Calu3 (cell line): ENCODE measurements at regions of chr10 and their contacts with region 1.

Region 1: DNA sequence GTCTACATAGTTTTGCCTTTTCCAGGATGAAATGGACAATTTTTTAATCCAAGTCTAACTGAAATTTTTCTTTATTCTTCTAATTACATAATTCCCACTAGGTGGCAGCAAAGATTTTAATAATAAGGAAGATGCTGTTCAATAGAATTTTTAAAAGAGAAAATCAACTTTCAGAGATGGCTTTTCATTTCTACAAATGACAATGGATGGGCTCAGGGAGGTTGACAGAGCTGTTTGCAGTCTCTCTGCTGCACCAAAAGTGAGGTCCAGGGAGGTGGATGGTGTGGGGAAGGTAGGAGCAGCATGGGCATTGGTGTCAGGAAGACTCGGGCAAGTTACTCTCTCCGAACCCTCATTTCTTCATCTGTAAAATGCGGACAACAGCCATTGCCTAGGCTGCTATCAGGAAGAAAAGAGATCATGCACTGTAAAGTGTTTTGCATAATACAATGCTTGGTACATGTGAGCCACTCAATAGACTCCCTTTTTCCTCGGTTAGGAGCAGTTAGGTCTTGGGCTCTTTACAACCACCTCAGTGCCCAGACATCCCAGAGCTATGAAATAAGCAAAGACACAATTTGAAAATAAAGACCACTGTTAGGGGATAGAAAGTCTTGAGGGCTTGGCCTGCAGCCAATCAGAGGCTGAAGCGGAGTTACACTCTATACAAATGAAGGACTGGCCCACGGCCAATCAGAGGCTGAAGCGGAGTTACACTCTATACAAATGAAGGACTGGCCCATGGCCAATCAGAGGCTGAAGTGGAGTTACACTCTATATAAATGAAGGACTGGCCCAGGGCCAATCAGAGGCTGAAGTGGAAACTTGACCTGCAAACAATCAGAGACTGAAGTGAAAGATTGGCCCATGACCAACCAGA is 107.1 kb downstream of the ABLIM1 start:
- DNase-seq: no peak
- H3K4me3 Mint-ChIP-seq: no peak overlapping the region
- H3K27ac Mint-ChIP-seq: no peak overlapping the region
- H3K4me1 Mint-ChIP-seq: peaks cover 18% of the 10 kb centered on the region
- H3K27me3 Mint-ChIP-seq: no peaks in the 10 kb centered on the region
- CTCF ChIP-seq: no peak

Region 2: GRCh38 chr10:114470956-114471905 is 79.8 kb before region 1 on chr10:
- CTCF ChIA-PET with region 1: interaction called, 24 read pairs
- intact Hi-C with region 1: loop called (anchors 1 kb)
- DNase-seq: peak; percentile 52
- H3K4me3 Mint-ChIP-seq: no peak overlapping the region
- H3K27ac Mint-ChIP-seq: peak overlapping the region; percentile 71
- H3K4me1 Mint-ChIP-seq: peaks cover 15% of the 10 kb centered on the region
- H3K27me3 Mint-ChIP-seq: no peaks in the 10 kb centered on the region
- CTCF ChIP-seq: peak; percentile 48

Region 3: DNA sequence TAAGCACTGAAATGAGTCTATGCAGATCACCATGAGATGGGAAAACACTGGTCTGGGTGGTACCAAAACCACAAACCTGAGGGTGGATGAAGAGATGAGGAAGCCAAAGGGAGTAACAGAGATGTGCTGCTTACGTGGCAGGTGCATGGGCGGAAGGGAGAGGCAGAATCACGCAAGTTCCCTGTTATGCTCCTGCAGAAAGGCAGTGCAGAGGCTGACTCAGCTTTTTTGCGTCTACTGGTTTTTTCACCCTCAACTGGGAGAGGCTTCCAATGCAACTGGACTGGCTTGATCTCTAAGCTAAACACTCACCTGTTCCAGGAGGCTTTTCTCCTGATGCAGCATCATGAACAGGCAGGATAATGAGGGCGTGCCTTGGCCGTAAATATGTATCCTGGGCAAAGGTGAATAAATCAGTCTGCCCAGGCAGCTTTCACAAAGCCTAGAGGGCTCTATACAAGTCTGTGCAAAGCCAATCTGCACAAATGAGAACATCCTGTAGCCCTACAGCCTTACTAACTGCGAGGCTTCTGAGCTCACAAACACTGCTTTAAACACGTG is 51.3 kb before region 1 on chr10:
- CTCF ChIA-PET with region 1: no interaction called
- intact Hi-C with region 1: no loop called
- DNase-seq: no peak
- H3K4me3 Mint-ChIP-seq: no peak overlapping the region
- H3K27ac Mint-ChIP-seq: no peak overlapping the region
- H3K4me1 Mint-ChIP-seq: peaks cover 1% of the 10 kb centered on the region
- H3K27me3 Mint-ChIP-seq: no peaks in the 10 kb centered on the region
- CTCF ChIP-seq: no peak